Left colon (tissue), 2 donors: ENCODE measurements at regions of chr16 and their contacts with region 1.

Region 1: GRCh38 chr16:51556694-51557340 is 405.7 kb upstream of the SALL1 start:
- DNase-seq: no peak
- ATAC-seq: no peak

Region 2: GRCh38 chr16:51500306-51500705 is 56.5 kb before region 1 on chr16:
- intact Hi-C with region 1: no loop called
- DNase-seq: no peak
- ATAC-seq: no peak

Region 3: GRCh38 chr16:51615141-51615540 is 58.3 kb after region 1 on chr16:
- intact Hi-C with region 1: loop called in 1 of 2 experiments (anchors 10 kb)
- DNase-seq: no peak
- ATAC-seq: no peak